ENCODE measurements at regions of chr3 and their contacts with region 1.

Region 1: GRCh38 chr3:129052675-129053074 is 7.9 kb upstream of the GP9 start:
- DNase-seq: no peak
- ATAC-seq: no peak
- H3K4me3 ChIP-seq: no peak overlapping the region
- H3K4me3 Mint-ChIP-seq: no peak overlapping the region
- H3K27ac ChIP-seq: no peak overlapping the region
- H3K27ac Mint-ChIP-seq: no peak overlapping the region
- H3K4me1 ChIP-seq: peaks cover 4% of the 10 kb centered on the region
- H3K4me1 Mint-ChIP-seq: peaks cover 10% of the 10 kb centered on the region
- H3K27me3 ChIP-seq: no peaks in the 10 kb centered on the region
- H3K27me3 Mint-ChIP-seq: no peaks in the 10 kb centered on the region
- CTCF ChIP-seq: no peak

Region 2: DNA sequence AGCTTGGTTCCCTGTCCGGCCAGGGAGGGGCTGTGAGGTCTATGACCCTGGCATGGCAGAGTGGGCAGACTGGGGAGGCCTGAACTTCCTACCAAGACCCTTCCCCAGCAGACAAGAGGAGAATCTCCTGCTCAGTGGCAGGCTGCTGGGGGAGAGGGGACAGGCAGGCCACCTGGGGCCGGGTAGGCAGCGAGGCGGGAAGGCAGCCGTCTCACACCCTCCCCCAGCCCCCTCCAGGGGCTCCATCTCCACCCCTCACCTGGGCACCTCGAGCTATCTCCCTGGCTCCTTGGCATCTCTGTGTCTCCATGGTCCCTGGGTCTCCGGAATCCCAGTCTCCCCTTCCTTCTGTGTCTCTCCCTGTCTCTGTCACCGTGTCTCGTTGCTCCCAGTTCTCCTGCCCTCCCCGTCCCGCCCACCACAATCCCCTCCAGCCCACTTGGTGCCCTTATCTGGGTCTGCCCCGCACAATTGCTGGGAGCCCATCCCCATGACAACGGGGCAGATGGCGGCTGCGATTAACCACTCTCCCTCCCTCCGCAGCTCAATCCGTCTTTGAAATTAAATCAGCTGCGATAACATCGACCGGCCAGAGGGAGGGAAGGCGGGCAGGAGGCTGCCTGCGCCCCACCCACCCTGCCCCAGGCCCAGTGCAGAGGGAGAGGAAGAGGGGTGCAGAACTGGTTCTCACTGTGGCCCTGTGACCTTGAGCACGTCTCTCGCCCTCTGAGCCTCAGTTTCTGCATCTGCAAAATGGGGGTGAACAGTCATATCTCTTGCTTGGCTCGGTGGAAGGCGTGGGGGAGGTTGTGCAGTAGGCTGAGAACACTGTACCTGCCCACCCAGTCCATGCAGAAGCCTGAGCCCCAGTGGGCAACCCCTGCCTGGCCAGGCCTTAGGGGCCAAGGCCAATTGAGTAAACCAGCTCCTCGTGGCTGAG is 595.6 kb before region 1 on chr3:
- CTCF ChIA-PET with region 1: no interaction called
- POLR2A ChIA-PET with region 1: no interaction called
- intact Hi-C with region 1: no loop called
- DNase-seq: no peak
- ATAC-seq: no peak
- H3K4me3 ChIP-seq: no peak overlapping the region
- H3K4me3 Mint-ChIP-seq: no peak overlapping the region
- H3K27ac ChIP-seq: no peak overlapping the region
- H3K27ac Mint-ChIP-seq: no peak overlapping the region
- H3K4me1 ChIP-seq: no peaks in the 10 kb centered on the region
- H3K4me1 Mint-ChIP-seq: no peaks in the 10 kb centered on the region
- H3K27me3 ChIP-seq: peaks cover 0 to 6% of the 10 kb centered on the region in 2 experiments
- H3K27me3 Mint-ChIP-seq: peaks cover 18% of the 10 kb centered on the region
- CTCF ChIP-seq: no peak

Region 3: DNA sequence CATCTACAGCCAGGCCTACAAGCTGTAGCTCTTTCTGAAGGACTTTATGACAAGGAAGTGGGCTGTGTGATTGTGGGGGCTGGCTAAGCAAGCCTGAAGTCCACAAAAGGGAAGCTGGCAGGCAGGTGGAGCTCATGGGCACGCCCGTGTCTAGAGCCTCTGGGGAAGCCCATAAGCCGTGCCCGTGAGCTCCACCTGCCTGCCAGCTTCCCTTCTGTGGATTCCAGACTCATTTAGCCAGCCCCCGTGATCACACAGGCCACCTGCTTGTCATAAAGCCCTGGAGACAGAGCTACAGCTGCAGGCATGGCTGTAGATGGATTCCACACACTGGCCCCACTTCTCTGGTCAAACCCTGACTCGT is 36.3 kb before region 1 on chr3:
- CTCF ChIA-PET with region 1: interaction called, 38 read pairs
- POLR2A ChIA-PET with region 1: interaction called, 20 read pairs
- intact Hi-C with region 1: no loop called
- DNase-seq: peak in 8 of 9 experiments; percentile 48 to 91 (median 74)
- ATAC-seq: peak; percentile 86
- H3K4me3 ChIP-seq: peak overlapping the region; percentile 40 to 41
- H3K4me3 Mint-ChIP-seq: peak overlapping the region; percentile 73
- H3K27ac ChIP-seq: peak overlapping the region; percentile 49 to 87
- H3K27ac Mint-ChIP-seq: peak overlapping the region; percentile 92
- H3K4me1 ChIP-seq: peaks cover 41% of the 10 kb centered on the region
- H3K4me1 Mint-ChIP-seq: peaks cover 44% of the 10 kb centered on the region
- H3K27me3 ChIP-seq: no peaks in the 10 kb centered on the region
- H3K27me3 Mint-ChIP-seq: no peaks in the 10 kb centered on the region
- CTCF ChIP-seq: peak; percentile 38

Region 4: GRCh38 chr3:129068291-129068886 is 15.7 kb after region 1 on chr3:
- CTCF ChIA-PET with region 1: interaction called, 52 read pairs
- POLR2A ChIA-PET with region 1: no interaction called
- intact Hi-C with region 1: no loop called
- DNase-seq: peak in 3 of 9 experiments; percentile 25 to 55 (median 38)
- ATAC-seq: peak; percentile 53
- H3K4me3 ChIP-seq: peak overlapping the region; percentile 33 to 37
- H3K4me3 Mint-ChIP-seq: peak overlapping the region; percentile 82
- H3K27ac ChIP-seq: no peak overlapping the region
- H3K27ac Mint-ChIP-seq: no peak overlapping the region
- H3K4me1 ChIP-seq: no peaks in the 10 kb centered on the region
- H3K4me1 Mint-ChIP-seq: peaks cover 28% of the 10 kb centered on the region
- H3K27me3 ChIP-seq: no peaks in the 10 kb centered on the region
- H3K27me3 Mint-ChIP-seq: peaks cover 3% of the 10 kb centered on the region
- CTCF ChIP-seq: no peak

Region 5: GRCh38 chr3:129120254-129121004 is 67.8 kb after region 1 on chr3:
- CTCF ChIA-PET with region 1: interaction called, 68 read pairs
- POLR2A ChIA-PET with region 1: interaction called, 38 read pairs
- intact Hi-C with region 1: loop called (anchors 1 kb)
- DNase-seq: peak; percentile 79 to 97 (median 92)
- ATAC-seq: peak; percentile 51
- H3K4me3 ChIP-seq: peak overlapping the region; percentile 85 to 93
- H3K4me3 Mint-ChIP-seq: peak overlapping the region; percentile 94
- H3K27ac ChIP-seq: peak overlapping the region; percentile 74
- H3K27ac Mint-ChIP-seq: peak overlapping the region; percentile 99
- H3K4me1 ChIP-seq: peaks cover 33% of the 10 kb centered on the region
- H3K4me1 Mint-ChIP-seq: peaks cover 59% of the 10 kb centered on the region
- H3K27me3 ChIP-seq: no peaks in the 10 kb centered on the region
- H3K27me3 Mint-ChIP-seq: no peaks in the 10 kb centered on the region
- CTCF ChIP-seq: peak; percentile 26

Region 6: GRCh38 chr3:129183569-129184395 is 131.1 kb after region 1 on chr3 and contains the start of gene CNBP:
- CTCF ChIA-PET with region 1: interaction called, 6 read pairs
- POLR2A ChIA-PET with region 1: interaction called, 3 read pairs
- intact Hi-C with region 1: loop called in 1 of 2 experiments (anchors 5 kb)
- DNase-seq: peak; percentile 80 to 96 (median 92)
- ATAC-seq: peak; percentile 96
- H3K4me3 ChIP-seq: peak within 1 kb of the TSS; percentile 77 to 91
- H3K4me3 Mint-ChIP-seq: peak within 1 kb of the TSS; percentile 97
- H3K27ac ChIP-seq: peak within 1 kb of the TSS; percentile 93 to 99
- H3K27ac Mint-ChIP-seq: peak within 1 kb of the TSS; percentile 99
- H3K4me1 ChIP-seq: peaks cover 33% of the 10 kb centered on the region
- H3K4me1 Mint-ChIP-seq: peaks cover 40% of the 10 kb centered on the region
- H3K27me3 ChIP-seq: no peaks in the 10 kb centered on the region
- H3K27me3 Mint-ChIP-seq: no peaks in the 10 kb centered on the region
- CTCF ChIP-seq: no peak
- total RNA-seq, gene CNBP: 296 to 301 TPM

Region 7: DNA sequence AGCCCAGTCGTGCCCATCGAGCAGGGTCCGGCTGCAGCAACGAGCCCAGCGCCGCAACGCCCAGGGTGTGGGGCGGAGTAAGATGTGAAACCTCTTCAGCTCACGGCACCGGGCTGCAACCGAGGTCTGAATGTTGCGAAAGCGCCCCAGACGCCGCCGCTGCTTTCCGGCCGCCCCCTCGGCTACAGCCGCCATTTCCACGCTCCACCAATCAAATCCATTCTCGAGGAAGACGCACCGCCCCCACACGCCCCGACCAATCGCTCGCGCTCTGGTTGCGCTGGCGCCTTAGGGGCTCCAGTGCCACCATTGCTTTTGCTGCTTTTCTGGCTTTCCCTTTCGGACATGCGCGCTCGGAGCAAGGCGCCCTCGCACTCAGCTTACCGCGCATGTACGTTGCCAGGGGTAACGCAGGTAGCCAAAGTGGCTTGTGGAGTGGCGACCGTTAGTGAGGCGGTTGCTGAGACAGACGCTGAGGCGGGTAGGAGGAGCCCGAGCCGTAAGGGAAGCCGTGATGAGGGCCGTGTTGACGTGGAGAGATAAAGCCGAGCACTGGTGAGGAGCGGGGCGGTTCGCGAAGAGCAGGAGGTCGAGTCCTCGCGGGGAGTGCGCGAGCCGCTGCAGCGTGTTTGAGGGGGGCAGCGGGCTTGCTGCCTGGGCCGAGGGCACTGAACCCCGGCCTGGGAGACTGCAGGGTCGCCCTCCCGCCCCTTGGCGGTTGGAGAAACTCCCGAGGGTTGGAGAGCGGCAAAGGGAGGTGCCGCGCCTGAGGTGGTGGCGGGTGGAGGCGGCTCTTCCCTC is 387.3 kb after region 1 on chr3 and contains the starts of genes IFT122 and MBD4:
- CTCF ChIA-PET with region 1: no interaction called
- POLR2A ChIA-PET with region 1: no interaction called
- intact Hi-C with region 1: no loop called
- DNase-seq: peak; percentile 97 to 100 (median 98)
- ATAC-seq: peak; percentile 82
- H3K4me3 ChIP-seq: peak within 1 kb of the TSS; percentile 87 to 99
- H3K4me3 Mint-ChIP-seq: peak within 1 kb of the TSS; percentile 96
- H3K27ac ChIP-seq: peak within 1 kb of the TSS; percentile 92 to 93
- H3K27ac Mint-ChIP-seq: peak within 1 kb of the TSS; percentile 98
- H3K4me1 ChIP-seq: peaks cover 34% of the 10 kb centered on the region
- H3K4me1 Mint-ChIP-seq: peaks cover 70% of the 10 kb centered on the region
- H3K27me3 ChIP-seq: no peaks in the 10 kb centered on the region
- H3K27me3 Mint-ChIP-seq: no peaks in the 10 kb centered on the region
- CTCF ChIP-seq: no peak
- total RNA-seq, gene IFT122: 14.7 to 16.9 TPM
- total RNA-seq, gene MBD4: 48.5 to 51.8 TPM

Measured in CD8-positive, alpha-beta T cell (primary cell).